ENCODE measurements at regions of chr6 and their contacts with region 1.

Region 1: GRCh38 chr6:2988426-2989331 is 11.0 kb upstream of the NQO2 start:
- DNase-seq: peak; percentile 67 to 88 (median 80)
- ATAC-seq: peak; percentile 73
- H3K4me3 Mint-ChIP-seq: peak overlapping the region; percentile 82 to 99 (median 96)
- H3K27ac Mint-ChIP-seq: peak overlapping the region; percentile 98 to 100 (median 100)
- H3K4me1 Mint-ChIP-seq: peaks cover 14 to 31% (median 28%) of the 10 kb centered on the region in 4 donors
- H3K27me3 Mint-ChIP-seq: no peaks in the 10 kb centered on the region

Region 2: GRCh38 chr6:2791124-2791974 is 197.3 kb before region 1 on chr6:
- POLR2A ChIA-PET with region 1: interaction called, 31 read pairs
- DNase-seq: peak in 9 of 10 donors; percentile 24 to 73 (median 43)
- ATAC-seq: peak; percentile 73
- H3K4me3 Mint-ChIP-seq: peak overlapping the region in 9 of 10 donors; percentile 18 to 72 (median 55)
- H3K27ac Mint-ChIP-seq: peak overlapping the region in 9 of 10 donors; percentile 57 to 86 (median 74)
- H3K4me1 Mint-ChIP-seq: peaks cover 21 to 49% (median 38%) of the 10 kb centered on the region in 4 donors
- H3K27me3 Mint-ChIP-seq: no peaks in the 10 kb centered on the region

Region 3: DNA sequence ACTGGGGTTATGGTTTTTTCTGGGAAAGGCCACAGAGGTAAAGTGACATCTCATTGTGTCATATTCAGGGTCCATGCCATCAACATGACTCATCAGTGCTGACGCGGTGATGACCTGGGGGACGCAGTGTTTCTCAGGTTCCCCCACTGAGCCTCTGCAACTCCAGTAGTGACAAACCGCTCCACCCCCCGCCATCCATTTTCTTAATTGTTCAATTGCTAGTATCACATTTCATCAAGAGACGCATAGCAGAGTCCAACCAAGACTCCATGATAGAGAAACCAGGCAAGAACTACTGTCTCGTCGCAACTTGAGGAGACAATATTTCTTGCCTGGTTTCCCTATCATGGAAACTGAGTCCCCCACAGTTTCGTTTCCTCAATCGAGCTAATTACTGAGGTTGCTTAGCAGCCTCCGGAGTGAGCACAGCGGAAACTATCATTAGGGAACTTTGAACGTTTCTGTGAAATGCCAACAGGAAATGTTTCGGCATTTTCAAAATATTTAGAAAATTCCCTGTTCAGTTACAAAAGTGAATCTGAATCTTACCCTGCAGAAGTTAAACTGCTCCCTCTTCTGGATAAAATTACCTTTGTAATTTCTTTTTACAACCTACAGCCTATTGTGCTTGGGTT is 134.8 kb before region 1 on chr6:
- POLR2A ChIA-PET with region 1: interaction called, 68 read pairs
- DNase-seq: peak in 7 of 10 donors; percentile 34 to 50 (median 39)
- ATAC-seq: peak; percentile 6 to 13
- H3K4me3 Mint-ChIP-seq: peak overlapping the region; percentile 55 to 86 (median 77)
- H3K27ac Mint-ChIP-seq: peak overlapping the region; percentile 85 to 100 (median 94)
- H3K4me1 Mint-ChIP-seq: peaks cover 37 to 74% (median 69%) of the 10 kb centered on the region in 4 donors
- H3K27me3 Mint-ChIP-seq: peaks cover 0 to 2% (median 0%) of the 10 kb centered on the region in 5 donors

Region 4: DNA sequence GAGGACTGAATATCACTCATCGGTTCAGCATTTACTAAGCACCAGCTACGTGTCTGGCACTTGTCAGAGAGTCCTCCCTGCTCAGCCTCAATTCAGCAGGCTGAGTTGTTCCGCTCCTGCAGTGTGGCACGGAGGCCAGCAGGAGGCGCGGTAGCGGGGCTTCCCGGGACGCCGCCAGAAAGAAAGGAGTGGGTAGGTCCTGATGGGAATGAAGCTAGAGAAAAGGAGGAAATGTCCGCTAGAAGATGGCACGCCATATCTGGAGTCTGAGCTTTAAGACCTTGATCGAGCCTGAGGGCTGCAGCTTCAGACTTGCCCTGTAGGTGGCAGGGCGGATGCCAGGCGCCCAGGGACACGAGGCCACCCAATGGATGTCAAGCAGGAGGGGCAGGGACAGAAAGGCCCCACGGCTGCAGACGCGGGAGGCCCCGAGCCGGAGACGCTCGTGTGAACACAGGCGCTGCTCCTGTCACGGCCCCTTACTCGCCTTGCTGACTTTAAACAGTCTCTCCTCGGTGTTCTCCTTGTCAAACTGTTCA is 36.1 kb before region 1 on chr6:
- POLR2A ChIA-PET with region 1: interaction called, 29 read pairs
- DNase-seq: peak in 5 of 10 donors; percentile 30 to 63 (median 43)
- ATAC-seq: peak; percentile 67 to 94
- H3K4me3 Mint-ChIP-seq: peak overlapping the region in 5 of 10 donors; percentile 10 to 62 (median 46)
- H3K27ac Mint-ChIP-seq: peak overlapping the region in 6 of 10 donors; percentile 3 to 85 (median 40)
- H3K4me1 Mint-ChIP-seq: peaks cover 9 to 33% (median 17%) of the 10 kb centered on the region in 4 donors
- H3K27me3 Mint-ChIP-seq: no peaks in the 10 kb centered on the region

Region 5: GRCh38 chr6:2971420-2972218 is 17.1 kb before region 1 on chr6 and contains the start of gene SERPINB6:
- POLR2A ChIA-PET with region 1: interaction called, 112 read pairs
- DNase-seq: peak; percentile 17 to 75 (median 40)
- ATAC-seq: peak; percentile 69 to 74
- H3K4me3 Mint-ChIP-seq: peak within 1 kb of the TSS; percentile 84 to 94 (median 92)
- H3K27ac Mint-ChIP-seq: peak within 1 kb of the TSS; percentile 87 to 97 (median 94)
- H3K4me1 Mint-ChIP-seq: peaks cover 24 to 60% (median 43%) of the 10 kb centered on the region in 4 donors
- H3K27me3 Mint-ChIP-seq: peaks cover 0 to 10% (median 0%) of the 10 kb centered on the region in 5 donors
- polyA plus RNA-seq, gene SERPINB6: 128 to 152 (median 141) TPM

Region 6: GRCh38 chr6:3033652-3034051 is 45.0 kb after region 1 on chr6:
- POLR2A ChIA-PET with region 1: no interaction called
- DNase-seq: no peak
- ATAC-seq: no peak
- H3K4me3 Mint-ChIP-seq: no peak overlapping the region
- H3K27ac Mint-ChIP-seq: no peak overlapping the region
- H3K4me1 Mint-ChIP-seq: peaks cover under 1 to 9% (median 3%) of the 10 kb centered on the region in 4 donors
- H3K27me3 Mint-ChIP-seq: peaks cover 0 to 14% (median 3%) of the 10 kb centered on the region in 5 donors

Region 7: GRCh38 chr6:3052481-3053230 is 64.0 kb after region 1 on chr6:
- POLR2A ChIA-PET with region 1: interaction called, 23 read pairs
- DNase-seq: no peak
- ATAC-seq: no peak
- H3K4me3 Mint-ChIP-seq: peak overlapping the region; percentile 63 to 83 (median 78)
- H3K27ac Mint-ChIP-seq: peak overlapping the region in 7 of 10 donors; percentile 19 to 90 (median 69)
- H3K4me1 Mint-ChIP-seq: peaks cover 6 to 24% (median 19%) of the 10 kb centered on the region in 4 donors
- H3K27me3 Mint-ChIP-seq: peaks cover 0 to 9% (median 0%) of the 10 kb centered on the region in 5 donors

Measured in naive thymus-derived CD8-positive, alpha-beta T cell (primary cell).